Right cardiac atrium (tissue), 5 donors: ENCODE measurements at regions of chr1 and their contacts with region 1.

Region 1: DNA sequence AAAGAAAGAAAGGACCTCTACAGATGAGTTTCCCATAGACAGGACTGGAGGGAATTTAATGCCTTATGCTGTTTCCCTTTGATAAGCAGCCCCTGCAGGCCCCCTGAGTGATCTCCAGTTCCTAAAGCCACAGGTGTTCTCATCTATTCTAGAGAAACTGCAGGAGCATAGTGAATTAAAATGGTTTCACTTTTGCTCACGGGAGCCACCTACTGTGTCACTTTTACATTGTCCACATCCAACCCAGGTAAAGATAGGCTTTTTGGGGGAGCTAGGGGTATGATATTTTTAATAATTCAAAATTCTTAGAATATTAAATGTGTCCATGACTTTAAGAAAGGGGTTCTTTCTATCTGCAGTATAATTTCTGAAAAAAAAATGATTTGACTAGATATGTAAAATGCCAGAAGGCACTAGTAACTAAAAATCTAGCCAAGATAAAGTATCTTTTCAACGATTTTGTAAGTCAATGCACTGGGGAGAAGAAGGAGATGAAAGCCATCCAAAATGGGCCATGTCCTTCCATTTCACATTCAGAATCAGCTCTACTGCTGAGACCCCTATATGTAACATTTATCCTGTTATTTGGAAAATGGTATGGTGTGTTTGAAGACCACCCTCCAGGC is 267.3 kb upstream of the DUSP10 start:
- DNase-seq: no peak
- ATAC-seq: peak; percentile 38 to 39
- H3K4me3 ChIP-seq: no peak overlapping the region
- H3K27ac ChIP-seq: no peak overlapping the region
- H3K4me1 ChIP-seq: no peaks in the 10 kb centered on the region
- H3K27me3 ChIP-seq: no peaks in the 10 kb centered on the region

Region 2: DNA sequence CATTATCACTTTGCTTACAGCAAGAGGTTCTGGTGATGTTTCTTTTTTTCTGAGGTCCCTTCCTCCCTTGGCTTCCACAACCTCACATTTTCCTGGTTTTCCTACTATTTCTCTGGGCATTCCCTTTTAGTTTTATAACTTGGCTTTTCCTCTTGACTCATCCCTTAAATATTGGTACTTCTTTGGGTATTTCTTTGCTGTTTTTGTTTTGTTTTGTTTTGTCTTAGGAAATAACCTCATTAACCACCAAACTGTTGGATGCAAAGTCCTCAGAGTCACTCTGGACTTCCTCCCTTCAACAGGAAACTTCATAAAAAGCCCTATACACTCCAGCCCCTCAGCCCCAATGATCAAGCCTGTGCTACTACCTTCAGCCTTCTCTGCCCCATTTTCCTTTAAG is 478.4 kb before region 1 on chr1:
- intact Hi-C with region 1: loop called in 1 of 4 experiments (anchors 10 kb)
- DNase-seq: no peak
- ATAC-seq: no peak
- H3K4me3 ChIP-seq: no peak overlapping the region
- H3K27ac ChIP-seq: no peak overlapping the region
- H3K4me1 ChIP-seq: peaks cover 1% of the 10 kb centered on the region
- H3K27me3 ChIP-seq: no peaks in the 10 kb centered on the region